Left colon (tissue), 2 donors: ENCODE measurements at regions of chr18 and their contacts with region 1.

Region 1: GRCh38 chr18:12744103-12744502 is 41.3 kb downstream of the PSMG2 start:
- DNase-seq: no peak
- ATAC-seq: peak; percentile 63

Region 2: GRCh38 chr18:12478269-12479047 is 265.6 kb before region 1 on chr18:
- intact Hi-C with region 1: no loop called
- DNase-seq: no peak
- ATAC-seq: no peak

Region 3: GRCh38 chr18:12890506-12890905 is 146.4 kb after region 1 on chr18:
- intact Hi-C with region 1: loop called in 1 of 2 experiments (anchors 10 kb)
- DNase-seq: no peak
- ATAC-seq: peak; percentile 51